ENCODE measurements at regions of chr17 and their contacts with region 1.

Region 1: GRCh38 chr17:82212331-82213250 is at the start of gene CCDC57:
- DNase-seq: peak; percentile 86
- ATAC-seq: peak; percentile 76
- H3K4me3 Mint-ChIP-seq: peak within 1 kb of the TSS; percentile 83
- H3K27ac Mint-ChIP-seq: peak within 1 kb of the TSS; percentile 86
- H3K4me1 Mint-ChIP-seq: peaks cover 32% of the 10 kb centered on the region
- H3K27me3 Mint-ChIP-seq: no peaks in the 10 kb centered on the region
- total RNA-seq, gene CCDC57: 79.5 to 81.7 TPM

Region 2: GRCh38 chr17:82198092-82198491 is 14.5 kb before region 1 on chr17:
- POLR2A ChIA-PET with region 1: interaction called, 15 read pairs
- DNase-seq: no peak
- ATAC-seq: peak; percentile 51
- H3K4me3 Mint-ChIP-seq: peak overlapping the region; percentile 83
- H3K27ac Mint-ChIP-seq: peak overlapping the region; percentile 98
- H3K4me1 Mint-ChIP-seq: peaks cover 53% of the 10 kb centered on the region
- H3K27me3 Mint-ChIP-seq: no peaks in the 10 kb centered on the region

Measured in activated naive CD8-positive, alpha-beta T cell treated with anti-CD3 and anti-CD28 coated beads, Interleukin-2, amount 10 ng/mL, durations not matched to agents 7 days and 5 days (primary cell).